Activated CD4-positive, alpha-beta T cell treated with anti-CD3 and anti-CD28 coated beads for 36 hours (primary cell): ENCODE measurements at regions of chr10 and their contacts with region 1.

Region 1: DNA sequence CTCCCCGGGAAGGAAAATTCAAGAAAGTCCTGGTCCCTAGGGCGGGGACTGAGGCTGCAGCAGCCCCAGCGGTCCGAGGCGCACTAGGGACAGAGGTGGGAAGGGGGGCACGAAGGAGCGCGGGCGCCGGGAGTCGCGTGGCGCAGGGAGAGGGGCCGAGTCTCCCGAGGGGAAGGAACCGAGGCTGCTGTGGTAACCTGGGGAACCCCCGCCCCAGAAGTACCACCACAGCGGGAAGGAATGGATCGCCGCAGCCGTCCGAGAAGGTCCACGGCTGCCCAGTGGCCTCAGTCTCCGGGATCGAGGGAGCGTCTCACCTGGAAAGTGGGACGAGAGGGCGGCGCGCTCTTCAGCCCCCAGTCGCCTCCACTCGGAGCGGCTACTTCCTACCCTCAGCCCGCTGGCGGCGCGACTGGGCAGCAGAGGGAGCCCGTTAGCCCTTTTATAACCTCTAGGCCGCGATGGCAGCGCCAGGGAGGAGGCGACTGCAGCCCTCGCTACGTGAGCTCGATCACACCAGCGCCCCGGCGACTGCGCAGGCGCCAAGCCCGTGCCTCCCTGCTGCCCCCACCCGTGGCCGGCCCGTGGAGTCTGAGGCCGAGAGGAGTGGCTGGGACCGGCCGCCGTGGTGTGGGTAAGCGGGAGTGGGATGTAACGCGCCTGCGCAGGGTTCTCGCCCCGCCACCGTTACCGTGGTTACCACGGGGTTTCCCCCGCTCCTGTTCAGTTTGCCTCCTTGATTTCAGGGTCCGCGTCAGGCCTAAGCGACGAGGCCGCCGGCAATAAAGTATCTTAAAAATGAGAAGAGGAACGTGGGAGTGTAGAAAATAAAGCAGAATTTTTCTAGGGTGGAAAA is at the start of gene P4HA1:
- DNase-seq: peak; percentile 100
- ATAC-seq: peak; percentile 91
- H3K4me3 Mint-ChIP-seq: peak within 1 kb of the TSS; percentile 86
- H3K27ac Mint-ChIP-seq: peak within 1 kb of the TSS; percentile 97
- H3K4me1 Mint-ChIP-seq: peaks cover 27% of the 10 kb centered on the region
- H3K27me3 Mint-ChIP-seq: no peaks in the 10 kb centered on the region
- total RNA-seq, gene P4HA1: 51.8 to 58.5 TPM

Region 2: GRCh38 chr10:71850637-71851464 is 1245.8 kb before region 1 on chr10 and contains the start of gene PSAP:
- CTCF ChIA-PET with region 1: no interaction called
- POLR2A ChIA-PET with region 1: no interaction called
- intact Hi-C with region 1: loop called in 1 of 2 experiments (anchors 2 kb)
- DNase-seq: peak; percentile 99
- ATAC-seq: peak; percentile 99
- H3K4me3 Mint-ChIP-seq: peak within 1 kb of the TSS; percentile 90
- H3K27ac Mint-ChIP-seq: peak within 1 kb of the TSS; percentile 72
- H3K4me1 Mint-ChIP-seq: peaks cover 47% of the 10 kb centered on the region
- H3K27me3 Mint-ChIP-seq: no peaks in the 10 kb centered on the region
- total RNA-seq, gene PSAP: 100 to 109 TPM

Region 3: GRCh38 chr10:72692057-72692910 is 404.4 kb before region 1 on chr10 and contains the start of gene MCU:
- CTCF ChIA-PET with region 1: no interaction called
- POLR2A ChIA-PET with region 1: interaction called, 4 read pairs
- intact Hi-C with region 1: loop called in 1 of 2 experiments (anchors 1 kb)
- DNase-seq: peak; percentile 96
- ATAC-seq: peak; percentile 98
- H3K4me3 Mint-ChIP-seq: peak within 1 kb of the TSS; percentile 77
- H3K27ac Mint-ChIP-seq: peak within 1 kb of the TSS; percentile 75
- H3K4me1 Mint-ChIP-seq: peaks cover 40% of the 10 kb centered on the region
- H3K27me3 Mint-ChIP-seq: no peaks in the 10 kb centered on the region
- total RNA-seq, gene MCU: 15.1 to 16.0 TPM

Region 4: DNA sequence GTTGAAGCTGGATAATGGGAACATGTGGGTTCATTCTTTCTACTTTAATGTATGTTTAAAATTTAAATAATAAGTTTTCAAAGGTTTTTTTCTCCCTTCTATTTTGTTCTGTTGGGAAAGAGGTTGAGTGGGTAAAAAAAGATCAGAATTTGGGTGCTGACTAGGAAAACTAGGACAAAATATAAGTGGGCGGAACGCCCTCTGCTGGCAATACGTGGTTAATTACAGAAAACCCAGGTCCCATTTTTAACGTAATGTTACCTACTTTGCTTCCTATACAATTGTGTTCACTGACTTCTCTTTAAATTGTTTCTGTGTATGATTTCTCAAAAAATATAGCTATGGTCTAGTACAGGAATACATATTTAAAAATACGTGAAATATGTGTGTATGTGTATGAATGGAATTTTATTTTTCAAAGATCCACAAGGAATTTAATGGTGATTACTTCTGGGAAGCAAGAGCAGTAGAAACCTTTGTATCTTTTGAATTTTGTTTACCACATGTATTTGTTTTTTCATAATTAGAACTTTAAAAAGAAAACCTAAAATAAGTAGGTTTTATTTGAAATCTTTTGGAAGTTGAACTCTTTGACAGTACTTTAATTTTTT is 62.5 kb after region 1 on chr10:
- CTCF ChIA-PET with region 1: interaction called, 21 read pairs
- POLR2A ChIA-PET with region 1: no interaction called
- intact Hi-C with region 1: loop called (anchors 1 kb)
- DNase-seq: peak; percentile 74
- ATAC-seq: no peak
- H3K4me3 Mint-ChIP-seq: no peak overlapping the region
- H3K27ac Mint-ChIP-seq: no peak overlapping the region
- H3K4me1 Mint-ChIP-seq: peaks cover 36% of the 10 kb centered on the region
- H3K27me3 Mint-ChIP-seq: no peaks in the 10 kb centered on the region

Region 5: DNA sequence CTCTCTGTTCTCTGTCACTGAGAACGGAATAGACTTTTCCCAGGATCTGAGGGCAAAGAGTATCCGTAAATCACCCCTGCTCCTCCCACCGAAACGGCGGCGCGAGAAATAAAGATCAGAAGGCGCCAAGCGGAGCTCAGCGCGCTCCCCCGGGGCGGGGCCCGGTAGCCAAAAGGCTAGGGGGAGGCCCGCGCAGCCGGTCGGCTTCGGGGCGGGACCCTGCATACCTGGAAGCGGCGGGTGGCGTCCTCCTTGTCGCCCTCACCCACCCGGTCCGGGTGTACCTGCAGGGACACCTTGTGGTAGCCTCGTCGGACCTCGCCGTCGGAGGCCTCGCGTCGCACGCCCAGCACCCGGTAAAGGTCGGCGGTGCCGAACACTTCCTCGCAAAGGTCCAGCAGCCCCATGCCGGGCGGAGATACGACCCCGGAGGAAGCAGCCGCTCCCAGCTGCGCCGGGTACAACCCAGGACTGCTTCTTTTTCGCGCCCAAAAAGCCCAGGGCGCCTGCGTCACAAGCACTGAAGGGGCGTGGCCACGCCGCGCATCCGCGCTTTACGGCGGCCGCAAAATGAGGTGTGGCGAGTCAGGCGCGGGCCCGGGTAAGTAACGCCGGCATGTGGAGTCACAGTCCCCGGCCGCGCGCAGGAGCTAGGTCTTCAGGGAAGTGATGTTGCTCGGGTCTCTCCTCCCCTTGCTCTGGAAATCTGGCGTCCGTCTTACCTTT is 150.3 kb after region 1 on chr10 and contains the start of gene DNAJC9:
- CTCF ChIA-PET with region 1: no interaction called
- POLR2A ChIA-PET with region 1: interaction called, 16 read pairs
- intact Hi-C with region 1: loop called (anchors 1 to 5 kb)
- DNase-seq: peak; percentile 99
- ATAC-seq: peak; percentile 94
- H3K4me3 Mint-ChIP-seq: peak within 1 kb of the TSS; percentile 99
- H3K27ac Mint-ChIP-seq: peak within 1 kb of the TSS; percentile 97
- H3K4me1 Mint-ChIP-seq: peaks cover 58% of the 10 kb centered on the region
- H3K27me3 Mint-ChIP-seq: no peaks in the 10 kb centered on the region
- total RNA-seq, gene DNAJC9: 36.9 to 45.4 TPM

Region 6: DNA sequence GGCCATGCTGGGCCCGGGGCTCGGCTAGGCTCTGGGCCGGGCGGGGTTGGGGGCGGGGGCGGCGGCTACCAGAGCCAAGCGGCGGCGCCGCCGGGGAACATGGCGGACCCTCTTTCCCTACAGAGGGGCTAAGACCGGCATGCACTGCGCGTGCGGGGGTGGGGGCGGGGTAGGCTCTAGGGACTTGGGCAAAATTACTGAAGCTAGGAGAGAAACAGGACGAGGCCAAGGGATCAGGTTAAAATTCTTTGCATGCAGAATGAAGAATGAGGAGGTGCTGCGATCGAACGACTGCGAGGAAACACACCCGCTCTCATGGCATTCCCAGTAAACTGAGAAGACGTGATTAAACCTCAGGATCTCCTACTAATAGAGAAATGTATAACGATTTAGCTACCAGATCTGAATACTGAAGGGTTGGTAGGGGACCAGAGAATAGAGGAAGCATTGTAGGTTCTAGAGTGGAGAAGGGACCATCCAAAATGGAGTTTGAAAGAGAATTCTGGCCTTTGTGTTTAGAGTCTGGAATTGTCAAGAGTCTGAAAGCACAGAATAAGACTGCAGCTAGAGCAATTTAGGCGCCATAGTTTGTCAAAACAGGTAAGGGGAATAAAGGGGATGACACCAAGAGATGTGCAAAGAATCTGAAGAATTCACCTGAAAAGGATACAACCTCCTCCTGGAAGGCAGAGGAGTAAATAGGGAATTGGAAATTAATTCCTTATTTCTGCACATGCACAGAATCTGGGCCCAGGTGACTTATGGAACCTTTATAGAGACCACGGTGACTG is 399.4 kb after region 1 on chr10 and contains the start of gene PPP3CB:
- CTCF ChIA-PET with region 1: interaction called, 3 read pairs
- POLR2A ChIA-PET with region 1: no interaction called
- intact Hi-C with region 1: loop called (anchors 1 to 10 kb)
- DNase-seq: peak; percentile 96
- ATAC-seq: peak; percentile 81
- H3K4me3 Mint-ChIP-seq: peak within 1 kb of the TSS; percentile 91
- H3K27ac Mint-ChIP-seq: peak within 1 kb of the TSS; percentile 99
- H3K4me1 Mint-ChIP-seq: peaks cover 45% of the 10 kb centered on the region
- H3K27me3 Mint-ChIP-seq: no peaks in the 10 kb centered on the region
- total RNA-seq, gene PPP3CB: 42.3 to 45.3 TPM

Region 7: GRCh38 chr10:73743905-73744663 is 647.4 kb after region 1 on chr10 and contains the start of gene SEC24C:
- CTCF ChIA-PET with region 1: no interaction called
- POLR2A ChIA-PET with region 1: interaction called, 4 read pairs
- intact Hi-C with region 1: loop called in 1 of 2 experiments (anchors 1 kb)
- DNase-seq: peak; percentile 98
- ATAC-seq: peak; percentile 87
- H3K4me3 Mint-ChIP-seq: peak within 1 kb of the TSS; percentile 95
- H3K27ac Mint-ChIP-seq: peak within 1 kb of the TSS; percentile 100
- H3K4me1 Mint-ChIP-seq: peaks cover 42% of the 10 kb centered on the region
- H3K27me3 Mint-ChIP-seq: no peaks in the 10 kb centered on the region
- total RNA-seq, gene SEC24C: 84.6 to 88.2 TPM